ENCODE measurements at regions of chr4 and their contacts with region 1.

Region 1: DNA sequence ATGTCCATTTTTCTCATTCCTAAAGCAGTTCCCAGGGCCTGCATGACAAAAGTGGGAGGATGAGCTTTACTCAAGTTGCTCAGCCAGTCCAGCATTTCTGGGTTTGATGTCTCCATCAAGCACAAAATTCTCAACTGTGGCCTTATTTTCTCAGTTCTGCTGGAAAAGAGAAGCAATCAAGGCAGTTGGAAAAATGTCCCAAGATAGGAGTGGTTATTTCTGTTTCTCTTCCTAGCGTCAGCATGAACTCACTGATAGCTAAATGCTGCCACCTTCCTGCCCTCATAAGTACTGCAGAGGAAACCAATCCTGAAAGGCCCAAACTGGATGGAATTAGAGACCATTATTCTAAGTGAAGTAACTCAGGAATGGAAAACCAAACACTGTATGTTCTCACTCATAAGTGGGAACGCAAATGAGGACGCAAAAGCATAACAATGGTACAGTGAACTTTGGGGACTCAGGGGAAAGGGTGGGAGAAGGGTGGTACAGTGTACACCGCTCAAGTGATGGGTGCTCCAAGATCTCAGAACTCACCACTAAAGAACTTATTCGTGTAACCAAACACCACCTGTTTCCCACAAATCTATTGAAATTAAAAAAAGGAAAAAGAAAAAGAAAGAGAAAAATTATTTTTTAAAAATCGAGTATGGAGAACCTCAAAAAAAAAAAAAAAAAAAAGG is 29.6 kb downstream of the ADH7 start:
- DNase-seq: peak; percentile 61
- ATAC-seq: peak; percentile 78 to 85

Region 2: DNA sequence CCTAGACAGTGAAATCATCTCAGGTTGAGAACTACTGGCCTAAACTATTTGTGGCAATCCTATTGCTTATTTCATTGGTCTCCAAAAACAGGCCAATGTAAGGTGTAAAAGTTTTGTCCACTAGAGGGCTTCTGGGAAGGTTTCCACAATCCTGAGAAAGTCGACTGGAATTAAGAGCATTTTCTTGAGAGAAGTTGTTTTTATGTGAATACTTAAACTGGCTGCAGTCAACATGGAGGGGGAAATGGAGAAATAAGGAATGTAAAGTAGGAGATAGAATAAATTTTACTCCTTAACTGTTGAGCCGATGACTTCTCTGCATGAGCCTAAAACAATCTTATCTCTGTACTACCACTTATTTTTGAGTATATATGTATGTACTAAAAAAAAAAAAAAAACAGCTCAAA is 465.7 kb before region 1 on chr4:
- intact Hi-C with region 1: loop called in 1 of 2 experiments (anchors 10 kb)
- DNase-seq: no peak
- ATAC-seq: peak; percentile 49 to 70

Region 3: GRCh38 chr4:99100876-99101275 is 304.7 kb before region 1 on chr4:
- intact Hi-C with region 1: no loop called
- DNase-seq: no peak
- ATAC-seq: no peak

Region 4: DNA sequence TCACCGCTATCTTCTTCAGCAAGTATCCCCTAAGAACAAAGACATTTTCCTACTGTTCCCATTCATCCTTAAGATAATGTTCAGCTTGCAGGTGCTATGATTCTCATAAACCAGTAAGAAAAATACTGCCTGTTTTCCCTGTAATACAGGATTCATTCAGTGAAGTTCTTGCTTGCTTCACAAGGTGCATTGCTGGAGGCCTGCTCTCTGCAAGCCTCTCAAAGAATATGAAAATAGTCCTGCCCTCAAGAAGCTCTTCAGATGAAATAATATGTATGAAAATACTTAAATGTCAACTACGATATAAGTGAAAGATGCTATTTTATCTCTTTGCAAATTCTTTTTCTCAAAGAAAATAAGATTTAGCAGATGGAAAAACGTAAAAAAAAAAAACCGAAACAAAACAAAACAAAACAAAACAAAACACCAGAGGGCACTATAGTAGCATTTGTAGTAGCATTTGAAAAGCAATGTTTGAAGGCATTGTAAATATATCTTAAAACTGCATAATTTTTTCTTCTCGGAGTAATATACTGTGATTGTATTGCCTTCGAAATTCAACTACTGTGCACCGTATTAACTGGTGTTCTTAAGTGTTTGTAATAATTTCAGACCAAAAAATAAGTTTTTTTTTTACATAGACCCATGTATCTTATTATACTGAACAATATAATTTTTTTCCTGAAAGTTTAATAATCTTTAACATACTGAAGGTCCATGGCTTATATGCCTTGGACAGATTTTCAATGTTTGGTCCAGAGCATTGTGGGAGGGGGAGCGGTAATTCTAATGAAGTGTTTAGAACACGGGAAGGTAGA is 287.5 kb before region 1 on chr4:
- intact Hi-C with region 1: loop called in 1 of 2 experiments (anchors 1 kb)
- DNase-seq: no peak
- ATAC-seq: no peak

Region 5: DNA sequence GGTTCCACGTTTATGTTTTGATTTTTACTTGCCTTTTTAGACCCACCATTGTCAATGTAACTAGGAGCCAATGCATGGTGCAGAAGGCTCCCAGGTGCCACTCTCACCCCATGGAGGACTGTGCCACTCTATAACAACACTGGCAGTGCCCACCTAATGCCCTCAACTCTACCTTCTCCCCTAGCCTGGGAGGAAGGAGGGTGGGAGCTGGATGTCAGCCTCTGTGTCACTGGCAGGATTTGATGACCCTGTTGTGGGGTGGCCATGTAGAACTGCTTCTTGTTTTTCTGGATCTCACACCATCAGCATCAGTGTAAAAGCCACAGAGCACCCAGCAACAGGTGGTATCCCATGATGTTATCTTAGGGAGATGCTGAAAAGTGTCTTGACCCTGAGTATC is 70.7 kb before region 1 on chr4:
- intact Hi-C with region 1: no loop called
- DNase-seq: no peak
- ATAC-seq: no peak